Activated CD4-positive, alpha-beta T cell treated with anti-CD3 and anti-CD28 coated beads for 36 hours (primary cell): ENCODE measurements at regions of chr9 and their contacts with region 1.

Region 1: GRCh38 chr9:34328987-34329832 is at the starts of genes KIF24 and NUDT2:
- DNase-seq: peak; percentile 98
- ATAC-seq: peak; percentile 97
- H3K4me3 Mint-ChIP-seq: peak within 1 kb of the TSS; percentile 95
- H3K27ac Mint-ChIP-seq: peak within 1 kb of the TSS; percentile 98
- H3K4me1 Mint-ChIP-seq: peaks cover 32% of the 10 kb centered on the region
- H3K27me3 Mint-ChIP-seq: no peaks in the 10 kb centered on the region
- total RNA-seq, gene KIF24: 5.9 to 7.7 TPM
- total RNA-seq, gene NUDT2: 14.9 to 22.9 TPM

Region 2: GRCh38 chr9:33264473-33265177 is 1064.6 kb before region 1 on chr9 and contains the starts of genes BAG1 and CHMP5:
- CTCF ChIA-PET with region 1: no interaction called
- POLR2A ChIA-PET with region 1: no interaction called
- intact Hi-C with region 1: loop called in 1 of 2 experiments (anchors 5 kb)
- DNase-seq: peak; percentile 100
- ATAC-seq: peak; percentile 96
- H3K4me3 Mint-ChIP-seq: peak within 1 kb of the TSS; percentile 97
- H3K27ac Mint-ChIP-seq: peak within 1 kb of the TSS; percentile 99
- H3K4me1 Mint-ChIP-seq: peaks cover 51% of the 10 kb centered on the region
- H3K27me3 Mint-ChIP-seq: no peaks in the 10 kb centered on the region
- total RNA-seq, gene BAG1: 47.9 to 65.8 TPM
- total RNA-seq, gene CHMP5: 102 to 106 TPM

Region 3: GRCh38 chr9:34079181-34079580 is 250.0 kb before region 1 on chr9:
- CTCF ChIA-PET with region 1: no interaction called
- POLR2A ChIA-PET with region 1: no interaction called
- intact Hi-C with region 1: no loop called
- DNase-seq: peak; percentile 13
- ATAC-seq: peak; percentile 54
- H3K4me3 Mint-ChIP-seq: no peak overlapping the region
- H3K27ac Mint-ChIP-seq: no peak overlapping the region
- H3K4me1 Mint-ChIP-seq: peaks cover 3% of the 10 kb centered on the region
- H3K27me3 Mint-ChIP-seq: no peaks in the 10 kb centered on the region

Region 4: DNA sequence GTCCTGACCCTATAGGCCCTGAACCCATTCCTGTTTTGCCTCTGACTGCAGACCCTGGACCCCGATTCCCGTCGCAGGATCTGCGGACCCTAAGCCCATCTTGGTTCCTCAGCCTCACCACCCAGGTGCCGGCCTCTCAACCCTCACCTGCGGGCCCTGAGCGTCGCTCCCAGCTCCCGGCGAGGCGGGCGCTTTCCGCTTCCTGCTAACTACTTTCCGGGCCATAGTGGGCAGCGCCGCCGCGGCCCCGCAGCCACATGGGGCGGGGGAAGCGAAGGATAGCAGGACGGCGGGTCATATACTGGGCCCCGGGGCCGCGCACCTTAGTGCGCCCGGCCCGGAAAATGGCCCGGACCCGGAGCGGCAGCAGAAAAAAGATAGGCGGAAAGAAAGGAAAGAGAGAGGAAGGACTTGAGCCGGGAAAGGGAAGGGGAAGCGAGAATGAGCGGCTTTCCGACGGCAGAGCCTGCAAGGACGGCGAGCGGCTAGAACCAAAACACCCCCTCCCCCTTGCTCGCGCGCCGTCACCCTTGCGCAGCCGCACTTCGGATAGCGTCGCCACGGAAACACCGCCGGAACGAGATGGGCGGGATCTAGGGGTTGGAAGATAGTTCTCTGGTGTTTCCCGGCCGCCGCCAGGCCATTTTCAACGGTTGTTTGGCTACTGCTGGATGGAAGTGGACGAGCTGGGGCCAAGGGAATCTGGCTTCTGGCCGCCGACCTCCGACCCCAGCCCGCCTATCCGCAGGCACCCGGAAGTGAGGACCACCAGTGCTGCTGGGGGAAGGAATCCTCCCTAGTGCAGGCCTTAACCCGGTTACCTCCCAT is 202.8 kb before region 1 on chr9 and contains the start of gene DCAF12:
- CTCF ChIA-PET with region 1: interaction called, 3 read pairs
- POLR2A ChIA-PET with region 1: no interaction called
- intact Hi-C with region 1: loop called (anchors 1 kb)
- DNase-seq: peak; percentile 95
- ATAC-seq: peak; percentile 97
- H3K4me3 Mint-ChIP-seq: peak within 1 kb of the TSS; percentile 95
- H3K27ac Mint-ChIP-seq: peak within 1 kb of the TSS; percentile 98
- H3K4me1 Mint-ChIP-seq: peaks cover 40% of the 10 kb centered on the region
- H3K27me3 Mint-ChIP-seq: no peaks in the 10 kb centered on the region
- total RNA-seq, gene DCAF12: 34.6 to 35.0 TPM

Region 5: DNA sequence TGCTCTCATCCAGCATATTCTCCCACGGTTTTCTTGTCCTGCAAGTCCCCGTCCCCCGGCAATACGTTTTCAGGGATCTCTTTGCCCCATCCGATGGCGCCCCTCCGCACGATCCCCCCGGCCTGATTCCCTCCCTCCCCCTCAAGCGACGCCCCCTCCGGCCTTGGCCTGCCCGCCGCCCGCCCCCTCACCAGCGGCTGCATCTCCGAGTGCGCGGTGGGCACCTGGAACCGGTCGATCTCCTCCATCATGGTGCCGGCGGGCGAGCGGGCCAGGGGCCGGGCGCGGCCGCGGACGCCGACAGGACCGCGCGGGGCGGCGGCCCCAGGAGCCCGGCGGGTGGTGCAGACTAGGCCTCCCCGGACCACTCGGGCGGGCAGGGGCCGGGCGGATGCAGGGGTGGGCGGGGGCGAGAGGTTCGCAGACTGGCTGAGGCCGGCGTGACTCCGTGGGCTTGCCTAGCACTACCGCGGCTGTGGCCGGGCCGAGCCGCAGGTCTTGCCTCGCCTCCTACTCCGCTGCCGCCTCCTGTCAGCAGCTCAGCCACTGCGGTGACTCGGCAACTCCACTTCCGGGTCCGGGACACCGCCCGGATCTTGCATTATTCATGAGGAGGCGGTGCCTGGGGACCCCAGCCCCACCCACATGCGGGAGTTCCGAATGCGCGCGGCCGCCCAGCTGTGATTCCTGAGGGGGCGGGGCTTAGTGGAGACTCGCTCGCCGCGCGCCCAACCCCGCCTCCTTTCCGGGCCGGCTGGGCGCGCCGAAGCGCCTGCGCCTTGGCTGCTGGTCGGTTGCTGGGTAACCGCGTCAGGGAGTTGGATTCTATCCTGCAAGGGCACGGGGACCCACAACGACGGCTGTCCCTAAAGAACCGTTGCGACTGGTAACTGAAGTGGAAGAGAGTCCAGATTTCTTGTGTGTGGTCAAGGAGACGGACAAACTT is 129.1 kb after region 1 on chr9 and contains the starts of genes DNAI1 and FAM219A:
- CTCF ChIA-PET with region 1: no interaction called
- POLR2A ChIA-PET with region 1: no interaction called
- intact Hi-C with region 1: loop called in 1 of 2 experiments (anchors 1 kb)
- DNase-seq: peak; percentile 99
- ATAC-seq: peak; percentile 92
- H3K4me3 Mint-ChIP-seq: peak within 1 kb of the TSS; percentile 84
- H3K27ac Mint-ChIP-seq: peak within 1 kb of the TSS; percentile 75
- H3K4me1 Mint-ChIP-seq: peaks cover 45% of the 10 kb centered on the region
- H3K27me3 Mint-ChIP-seq: peaks cover 9% of the 10 kb centered on the region
- total RNA-seq, gene DNAI1: 0.34 TPM in 1 of 2 experiments, not detected in the other
- total RNA-seq, gene FAM219A: 9.7 to 12.9 TPM

Region 6: GRCh38 chr9:34611829-34612630 is 282.8 kb after region 1 on chr9 and contains the start of gene RPP25L:
- CTCF ChIA-PET with region 1: no interaction called
- POLR2A ChIA-PET with region 1: no interaction called
- intact Hi-C with region 1: loop called in 1 of 2 experiments (anchors 2 kb)
- DNase-seq: peak; percentile 91
- ATAC-seq: peak; percentile 97
- H3K4me3 Mint-ChIP-seq: peak within 1 kb of the TSS; percentile 86
- H3K27ac Mint-ChIP-seq: peak within 1 kb of the TSS; percentile 93
- H3K4me1 Mint-ChIP-seq: peaks cover 16% of the 10 kb centered on the region
- H3K27me3 Mint-ChIP-seq: no peaks in the 10 kb centered on the region
- total RNA-seq, gene RPP25L: 29.3 to 35.2 TPM

Region 7: DNA sequence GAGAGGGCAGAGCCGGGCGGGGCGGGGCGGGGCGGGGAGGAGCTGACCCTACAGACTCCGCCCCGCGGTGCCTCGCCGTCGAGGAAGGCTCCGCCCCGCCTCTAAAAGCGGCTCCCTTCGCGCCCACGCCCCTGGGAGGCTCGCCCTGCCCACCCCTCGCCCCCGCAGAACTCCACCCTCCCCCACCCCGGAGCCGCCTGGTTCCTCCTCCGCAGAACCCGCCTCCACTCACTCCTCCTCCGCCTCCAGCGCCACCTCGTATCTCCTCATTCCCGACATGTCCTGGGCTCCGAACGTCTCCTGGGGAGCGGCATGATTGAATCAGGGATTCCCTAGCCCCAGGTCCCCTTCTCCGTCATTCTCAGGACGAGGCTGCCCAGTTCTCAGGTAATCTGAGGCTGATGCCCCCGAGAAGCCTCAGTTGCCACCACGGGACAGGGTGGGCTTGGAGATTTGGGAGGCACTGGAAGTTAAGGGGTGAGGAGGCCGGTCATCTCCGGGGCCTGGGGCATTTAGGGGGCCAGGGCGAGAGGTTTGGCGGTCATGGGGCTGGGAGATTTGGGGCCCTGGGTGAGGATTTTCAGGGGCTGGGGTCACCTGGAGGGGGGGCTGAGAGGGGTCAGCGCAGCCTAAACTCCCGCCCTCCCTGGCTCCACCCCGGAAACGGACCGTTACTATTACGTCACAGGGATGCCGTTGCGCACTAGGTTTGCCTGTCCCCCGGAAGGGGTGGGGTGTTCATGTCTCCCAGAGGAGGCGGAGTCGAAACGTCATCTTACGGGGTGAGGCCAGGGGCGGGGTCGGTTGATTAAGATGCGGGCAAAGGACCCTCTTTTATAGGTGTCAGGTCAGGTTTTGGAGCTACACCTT is 336.4 kb after region 1 on chr9:
- CTCF ChIA-PET with region 1: no interaction called
- POLR2A ChIA-PET with region 1: no interaction called
- intact Hi-C with region 1: loop called in 1 of 2 experiments (anchors 1 kb)
- DNase-seq: peak; percentile 93
- ATAC-seq: peak; percentile 75
- H3K4me3 Mint-ChIP-seq: peak overlapping the region; percentile 77
- H3K27ac Mint-ChIP-seq: peak overlapping the region; percentile 87
- H3K4me1 Mint-ChIP-seq: peaks cover 33% of the 10 kb centered on the region
- H3K27me3 Mint-ChIP-seq: no peaks in the 10 kb centered on the region